Gastrocnemius medialis (tissue), 4 donors: ENCODE measurements at regions of chr18 and their contacts with region 1.

Region 1: GRCh38 chr18:53080687-53081086 is 740.7 kb downstream of the DCC start:
- DNase-seq: no peak
- ATAC-seq: no peak
- H3K4me3 ChIP-seq: no peak overlapping the region
- H3K27ac ChIP-seq: no peak overlapping the region
- H3K4me1 ChIP-seq: no peaks in the 10 kb centered on the region
- H3K27me3 ChIP-seq: no peaks in the 10 kb centered on the region
- CTCF ChIP-seq: no peak
- POLR2A ChIP-seq: no peak

Region 2: DNA sequence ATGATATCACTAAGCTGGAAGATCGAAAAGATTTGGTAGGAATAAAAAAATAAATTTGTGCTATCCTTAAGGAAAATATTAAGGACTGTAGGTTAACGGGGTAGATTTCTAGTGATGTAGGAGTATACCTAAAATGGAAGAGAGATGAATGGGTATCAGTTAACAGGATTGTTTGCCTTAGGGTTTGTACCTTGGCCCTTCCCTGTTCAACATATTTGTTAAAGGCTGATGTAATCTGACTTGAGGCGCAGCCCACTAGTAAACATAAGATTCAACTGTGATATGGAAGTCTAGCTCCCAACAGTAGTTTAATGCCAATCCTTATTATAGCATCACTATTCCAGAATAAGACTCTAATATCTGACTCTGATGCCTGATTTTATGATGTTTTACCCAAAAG is 55.4 kb before region 1 on chr18:
- in situ Hi-C with region 1: loop called in 1 of 4 experiments (anchors 10 kb)
- intact Hi-C with region 1: no loop called
- DNase-seq: no peak
- ATAC-seq: no peak
- H3K4me3 ChIP-seq: no peak overlapping the region
- H3K27ac ChIP-seq: no peak overlapping the region
- H3K4me1 ChIP-seq: no peaks in the 10 kb centered on the region
- H3K27me3 ChIP-seq: no peaks in the 10 kb centered on the region
- CTCF ChIP-seq: no peak
- POLR2A ChIP-seq: no peak